Ascending aorta (tissue), 2 donors: ENCODE measurements at regions of chr16 and their contacts with region 1.

Region 1: DNA sequence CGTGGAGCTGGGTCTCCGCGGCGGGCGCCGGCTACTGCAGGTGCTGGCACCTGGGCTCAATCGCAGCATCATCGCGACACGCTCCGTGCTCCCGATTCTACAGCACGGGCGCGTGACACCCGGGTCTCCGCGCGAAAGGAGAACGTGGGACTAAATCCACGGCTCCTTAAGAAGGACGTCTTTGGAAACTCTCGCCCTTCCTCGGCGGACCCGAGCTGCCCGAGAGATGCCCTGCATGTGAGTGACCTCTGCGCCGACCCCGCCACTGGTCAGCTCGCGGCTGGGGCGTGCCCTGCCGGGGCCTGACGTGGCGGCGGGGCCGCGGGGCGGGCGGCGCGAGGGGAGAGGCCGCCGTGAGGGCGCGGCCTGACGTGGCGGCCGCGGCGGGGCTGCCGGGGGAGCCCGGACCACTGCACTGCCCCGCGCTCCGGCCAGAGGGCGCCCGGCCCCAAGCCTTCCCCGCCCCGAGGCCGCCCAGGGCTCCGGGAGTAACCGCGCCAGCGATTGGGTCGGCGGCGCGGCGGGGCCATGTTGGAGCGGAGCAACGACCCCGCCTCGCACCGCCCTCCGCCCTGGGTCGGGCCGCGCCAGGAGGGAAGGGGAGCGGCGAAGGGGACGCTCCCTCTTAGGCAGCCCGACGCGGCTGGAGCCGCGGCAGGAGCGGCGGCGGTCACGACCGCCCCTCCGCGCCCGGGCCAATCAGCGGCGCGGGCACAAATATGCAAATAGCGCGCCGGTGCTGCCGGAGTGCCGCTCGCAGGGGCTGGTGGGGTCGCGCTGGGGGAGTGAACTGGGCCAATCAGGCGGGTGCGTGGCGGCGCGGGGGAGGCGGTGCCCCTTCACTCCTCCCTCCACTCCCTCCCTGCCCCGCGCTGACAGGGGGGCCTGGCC is 75.6 kb downstream of the CHD9 start:
- DNase-seq: peak; percentile 88 to 98
- H3K4me3 ChIP-seq: peak overlapping the region; percentile 78 to 97
- H3K27ac ChIP-seq: peak overlapping the region; percentile 91 to 94
- H3K4me1 ChIP-seq: peaks cover 0 to 13% of the 10 kb centered on the region in 2 donors
- H3K27me3 ChIP-seq: no peaks in the 10 kb centered on the region
- CTCF ChIP-seq: peak; percentile 33 to 97 (median 52)

Region 2: GRCh38 chr16:53091466-53092211 is 38.8 kb before region 1 on chr16:
- intact Hi-C with region 1: loop called (anchors 2 kb)
- DNase-seq: peak in 1 of 2 donors; percentile 76
- H3K4me3 ChIP-seq: peak overlapping the region in 1 of 2 donors; percentile 44
- H3K27ac ChIP-seq: peak overlapping the region; percentile 80 to 88
- H3K4me1 ChIP-seq: peaks cover 19 to 44% of the 10 kb centered on the region in 2 donors
- H3K27me3 ChIP-seq: no peaks in the 10 kb centered on the region
- CTCF ChIP-seq: no peak

Region 3: GRCh38 chr16:53159781-53160436 is 29.5 kb after region 1 on chr16:
- intact Hi-C with region 1: loop called (anchors 2 kb)
- DNase-seq: no peak
- H3K4me3 ChIP-seq: no peak overlapping the region
- H3K27ac ChIP-seq: peak overlapping the region in 1 of 2 donors; percentile 73
- H3K4me1 ChIP-seq: peaks cover 4 to 7% of the 10 kb centered on the region in 2 donors
- H3K27me3 ChIP-seq: no peaks in the 10 kb centered on the region
- CTCF ChIP-seq: peak; percentile 31 to 68 (median 50)

Region 4: GRCh38 chr16:53220585-53220984 is 90.2 kb after region 1 on chr16:
- intact Hi-C with region 1: loop called (anchors 5 kb)
- DNase-seq: no peak
- H3K4me3 ChIP-seq: no peak overlapping the region
- H3K27ac ChIP-seq: peak overlapping the region; percentile 60 to 74
- H3K4me1 ChIP-seq: peaks cover 3 to 37% of the 10 kb centered on the region in 2 donors
- H3K27me3 ChIP-seq: no peaks in the 10 kb centered on the region
- CTCF ChIP-seq: peak in 1 of 3 experiments; percentile 28

Region 5: DNA sequence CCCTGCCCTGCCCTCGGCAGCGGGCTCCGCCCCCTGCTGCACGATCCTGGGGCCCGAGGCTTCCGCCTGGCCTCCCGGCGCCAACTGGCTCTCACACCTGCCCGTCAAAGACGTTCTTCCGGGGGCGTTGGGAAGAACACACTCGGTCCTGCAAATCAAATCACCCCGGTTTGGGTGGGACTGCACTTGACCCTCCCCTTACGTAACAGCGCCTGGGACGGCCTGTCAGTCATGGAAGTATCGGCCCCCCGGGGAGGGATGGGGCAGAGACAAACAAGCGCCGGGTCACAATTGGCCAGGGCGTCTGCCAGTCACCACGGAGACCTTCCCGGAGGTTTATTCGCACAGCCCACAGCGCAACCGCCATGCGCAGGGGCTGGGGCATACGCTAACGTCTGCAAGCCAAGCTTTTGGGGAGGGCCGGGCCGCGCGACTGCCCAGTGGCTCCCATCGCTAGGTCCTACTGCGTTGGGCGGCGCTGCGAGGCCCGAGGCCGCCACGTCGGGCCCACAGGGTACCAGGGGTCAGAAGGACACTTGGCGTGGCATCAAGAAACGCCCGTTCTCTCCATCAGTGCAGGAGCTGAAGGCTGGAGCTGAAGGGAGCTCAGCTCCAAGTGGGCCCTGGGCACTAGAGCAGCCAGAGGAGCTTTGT is 373.0 kb after region 1 on chr16:
- intact Hi-C with region 1: loop called (anchors 1 kb)
- DNase-seq: peak; percentile 100
- H3K4me3 ChIP-seq: peak overlapping the region; percentile 83 to 93
- H3K27ac ChIP-seq: peak overlapping the region; percentile 91 to 97
- H3K4me1 ChIP-seq: peaks cover 10 to 27% of the 10 kb centered on the region in 2 donors
- H3K27me3 ChIP-seq: no peaks in the 10 kb centered on the region
- CTCF ChIP-seq: no peak

Region 6: DNA sequence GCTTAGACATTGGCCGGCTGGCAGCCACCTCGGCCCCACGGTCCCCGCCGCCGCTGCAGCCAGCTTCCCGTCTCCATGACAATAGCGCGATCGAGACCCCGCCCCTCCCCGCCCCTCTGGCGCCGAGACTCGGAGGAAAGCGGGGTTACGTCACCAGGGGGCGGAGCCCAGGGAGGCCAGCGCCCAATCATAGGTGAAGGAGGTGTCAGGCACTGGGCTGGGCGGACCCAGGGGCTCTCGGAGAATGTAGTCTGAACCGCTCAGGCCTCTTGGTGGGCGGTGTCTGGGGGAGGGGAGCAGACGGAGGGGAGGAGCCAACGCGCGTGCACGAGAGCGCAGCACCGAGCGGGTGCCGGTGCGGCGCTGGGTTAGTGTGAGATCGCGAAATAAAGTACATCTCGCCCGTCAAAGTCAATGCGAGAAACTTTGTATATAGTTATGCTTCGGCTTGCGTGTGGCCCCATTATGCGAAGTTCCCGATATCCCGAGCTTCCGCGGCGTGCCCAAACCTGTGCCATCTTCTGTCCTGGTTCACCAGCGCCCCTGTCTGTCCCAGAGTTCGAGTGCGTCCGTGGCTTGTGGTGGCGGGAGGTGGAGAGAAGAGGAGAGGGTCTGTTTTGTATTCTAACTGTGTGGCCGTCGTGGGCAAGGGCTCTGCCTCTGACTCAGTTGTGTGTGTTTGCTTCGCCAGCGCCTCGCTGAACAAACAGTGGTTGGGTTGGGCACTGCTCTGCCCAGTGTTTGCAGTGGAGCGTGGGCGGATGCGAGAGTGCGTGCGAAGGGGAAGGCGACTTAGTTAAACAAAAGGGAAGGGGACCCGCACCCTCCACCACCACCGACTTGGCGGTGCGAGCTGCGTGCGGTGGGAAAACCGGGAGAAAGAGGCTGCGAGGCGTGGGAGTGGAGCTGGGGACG is 1798.9 kb after region 1 on chr16:
- intact Hi-C with region 1: loop called (anchors 10 kb)
- DNase-seq: peak; percentile 98 to 100
- H3K4me3 ChIP-seq: peak overlapping the region; percentile 82 to 94
- H3K27ac ChIP-seq: peak overlapping the region; percentile 91 to 99
- H3K4me1 ChIP-seq: peaks cover 7 to 13% of the 10 kb centered on the region in 2 donors
- H3K27me3 ChIP-seq: no peaks in the 10 kb centered on the region
- CTCF ChIP-seq: peak in 2 of 3 experiments; percentile 17 to 34